ENCODE measurements at regions of chr9 and their contacts with region 1.

Region 1: DNA sequence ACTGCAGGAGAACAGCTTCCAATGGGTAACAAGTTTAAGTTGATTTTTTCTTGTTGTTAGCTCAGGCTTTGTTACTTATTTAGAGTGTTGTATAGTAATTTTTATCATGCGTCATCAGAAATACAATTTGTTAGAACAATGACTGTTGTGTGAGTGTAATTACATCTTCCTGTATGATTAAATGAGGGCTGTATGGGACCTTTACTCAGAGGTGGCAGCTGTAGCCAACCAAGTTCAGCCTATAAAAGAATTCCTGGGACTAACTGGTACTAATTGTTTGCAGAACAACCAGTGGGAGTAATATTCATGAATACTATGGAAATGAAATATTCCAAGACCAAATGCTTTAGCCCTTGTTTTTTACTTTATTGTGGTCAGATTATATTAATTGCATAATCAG is 30.8 kb upstream of the TJP2 start:
- DNase-seq: no peak
- ATAC-seq: no peak

Region 2: DNA sequence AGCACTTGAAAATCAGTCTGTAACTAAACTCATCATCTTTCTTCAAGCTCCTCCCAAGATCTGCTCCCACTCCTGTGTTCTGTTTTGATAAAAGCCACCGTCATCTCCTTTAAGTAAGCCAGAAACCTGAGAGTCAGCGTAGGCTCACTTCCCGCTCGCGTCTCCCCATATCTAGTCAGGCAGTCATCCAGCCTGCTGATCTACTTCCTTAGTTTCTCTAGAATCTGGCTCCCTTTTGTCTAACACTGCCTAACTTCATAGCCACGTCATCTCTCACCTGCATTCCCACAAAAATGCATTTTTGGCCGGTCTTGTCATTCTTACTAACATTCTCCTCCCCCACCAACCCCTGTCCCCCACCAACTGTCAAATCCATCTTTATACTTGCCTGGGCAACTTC is 27.8 kb after region 1 on chr9:
- intact Hi-C with region 1: loop called (anchors 2 kb)
- DNase-seq: no peak
- ATAC-seq: no peak

Region 3: GRCh38 chr9:69186841-69187611 is 43.7 kb after region 1 on chr9:
- intact Hi-C with region 1: no loop called
- DNase-seq: no peak
- ATAC-seq: peak; percentile 62

Region 4: DNA sequence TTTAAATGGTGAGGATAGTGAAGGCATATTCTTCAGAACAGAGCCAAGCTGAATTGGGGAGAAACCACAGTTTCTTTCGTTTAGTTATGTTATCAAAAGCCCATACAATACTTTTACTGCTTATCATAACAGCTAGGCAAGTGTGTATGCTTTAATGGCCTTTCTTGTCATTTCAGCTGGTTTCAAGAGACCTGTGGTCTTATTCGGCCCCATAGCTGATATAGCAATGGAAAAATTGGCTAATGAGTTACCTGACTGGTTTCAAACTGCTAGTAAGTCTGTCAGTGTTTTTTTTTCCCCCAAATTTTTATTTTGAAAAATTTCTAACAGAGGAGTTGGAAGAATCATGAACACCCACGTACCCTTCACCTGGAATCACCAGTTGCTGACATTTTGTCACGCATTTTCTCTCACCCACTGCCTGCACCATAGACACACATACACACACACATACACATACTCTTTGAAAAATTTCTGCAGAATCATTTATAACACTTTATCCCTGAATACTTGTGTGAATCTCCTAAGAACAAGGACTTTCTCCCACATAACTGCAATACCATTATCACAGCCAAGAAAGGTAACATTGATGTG is 94.5 kb after region 1 on chr9:
- intact Hi-C with region 1: no loop called
- DNase-seq: no peak
- ATAC-seq: no peak

Region 5: DNA sequence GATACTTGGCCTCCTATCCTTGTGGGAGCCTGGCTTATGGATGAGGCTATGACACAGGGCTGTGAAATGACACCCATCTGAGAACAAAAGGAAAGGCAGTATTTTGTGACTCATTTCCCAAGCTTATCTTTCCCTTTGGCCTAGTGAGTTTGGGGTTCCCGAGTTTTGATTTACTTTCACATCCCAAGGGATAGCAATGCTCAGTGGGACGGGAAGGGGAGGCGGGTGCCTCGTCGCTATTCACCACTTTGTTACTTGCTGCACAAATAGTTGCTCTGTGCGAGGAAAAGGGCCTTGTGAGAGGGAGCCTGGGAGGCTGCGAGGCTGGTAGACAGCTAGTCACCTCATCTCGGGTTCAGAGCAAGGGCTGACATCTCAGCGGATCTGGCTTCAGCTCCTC is 122.6 kb after region 1 on chr9:
- intact Hi-C with region 1: no loop called
- DNase-seq: no peak
- ATAC-seq: no peak

Region 6: GRCh38 chr9:69295872-69296552 is 152.7 kb after region 1 on chr9:
- intact Hi-C with region 1: no loop called
- DNase-seq: peak; percentile 34
- ATAC-seq: peak; percentile 80

Measured in Right ventricle myocardium superior (tissue), 1 donor.